ENCODE measurements at regions of chrX and their contacts with region 1.

Region 1: DNA sequence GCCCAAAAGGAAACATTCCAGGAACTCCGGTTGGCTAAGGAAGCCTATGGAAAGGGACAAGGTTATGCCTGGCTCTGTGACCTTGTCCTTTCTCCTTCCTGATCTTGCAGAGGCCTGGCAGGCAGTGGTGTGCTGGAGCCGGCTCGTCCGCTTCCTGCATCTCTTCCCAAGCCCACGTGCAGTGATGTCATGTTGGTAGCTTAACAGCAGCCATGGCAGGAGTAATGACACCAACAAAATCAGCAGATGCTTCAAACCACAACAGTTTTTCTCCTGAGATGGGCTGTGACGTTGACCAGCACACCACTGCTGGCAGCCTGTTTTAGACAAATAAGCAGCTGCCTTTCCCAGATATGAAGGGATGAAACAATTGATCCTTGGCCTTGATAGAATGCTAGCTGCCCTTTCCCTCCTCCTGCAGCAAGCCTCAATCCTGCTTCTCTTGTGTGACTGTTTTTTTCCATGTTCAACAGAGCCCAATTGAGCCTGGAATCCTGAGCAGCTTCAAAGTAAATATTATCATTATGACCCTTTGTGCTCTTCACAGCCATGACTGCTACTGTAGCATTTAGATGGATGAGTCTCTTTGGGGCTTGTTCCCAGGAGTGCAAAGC is 23.4 kb downstream of the SEPTIN6 start:
- DNase-seq: no peak
- H3K4me3 ChIP-seq: no peak overlapping the region
- H3K27ac ChIP-seq: no peak overlapping the region
- H3K4me1 ChIP-seq: no peaks in the 10 kb centered on the region
- H3K27me3 ChIP-seq: no peaks in the 10 kb centered on the region
- CTCF ChIP-seq: no peak

Region 2: GRCh38 chrX:119636419-119636818 is 33.1 kb before region 1 on chrX:
- CTCF ChIA-PET with region 1: no interaction called
- POLR2A ChIA-PET with region 1: no interaction called
- intact Hi-C with region 1: no loop called
- DNase-seq: no peak
- H3K4me3 ChIP-seq: no peak overlapping the region
- H3K27ac ChIP-seq: no peak overlapping the region
- H3K4me1 ChIP-seq: no peaks in the 10 kb centered on the region
- H3K27me3 ChIP-seq: no peaks in the 10 kb centered on the region
- CTCF ChIP-seq: no peak

Region 3: DNA sequence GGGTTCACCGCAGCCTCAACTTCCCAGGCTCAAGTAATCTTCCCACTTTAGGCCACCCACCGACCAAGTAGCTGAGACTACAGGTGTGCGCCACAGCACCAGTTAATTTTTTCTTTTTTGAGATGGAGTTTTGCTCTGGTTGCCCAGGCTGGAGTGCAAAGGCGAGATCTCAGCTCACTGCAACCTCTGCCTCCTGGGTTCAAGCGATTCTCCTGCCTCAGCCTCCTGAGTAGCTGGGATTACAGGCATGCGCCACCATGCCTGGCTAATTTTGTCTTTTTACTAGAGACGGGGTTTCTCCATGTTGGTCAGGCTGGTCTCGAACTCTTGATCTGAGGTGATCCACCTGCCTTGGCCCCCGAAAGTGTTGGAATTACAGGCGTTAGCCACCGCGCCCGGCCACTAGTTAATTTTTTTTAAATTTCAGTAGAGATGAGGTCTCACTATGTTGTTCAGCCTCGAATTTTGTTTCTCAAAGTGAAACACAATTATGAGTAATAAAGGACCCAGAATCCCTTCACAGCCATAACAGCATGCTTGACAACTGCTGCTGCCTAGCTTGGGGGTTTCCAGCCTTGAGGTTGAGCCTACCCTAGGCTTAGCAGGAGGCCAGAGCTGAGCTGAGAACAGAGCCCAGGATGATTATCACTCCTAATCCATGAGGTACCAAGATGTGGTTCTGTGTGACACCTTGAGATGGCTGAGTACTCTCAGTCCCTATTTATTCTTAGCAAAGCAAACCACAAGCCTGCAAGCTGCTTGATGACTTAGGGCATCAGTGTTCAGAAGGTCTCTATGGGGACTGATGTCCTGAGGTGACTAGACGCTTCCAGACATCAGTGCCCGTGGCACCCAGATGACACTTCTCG is 21.7 kb before region 1 on chrX:
- CTCF ChIA-PET with region 1: interaction called, 16 read pairs
- POLR2A ChIA-PET with region 1: no interaction called
- intact Hi-C with region 1: no loop called
- DNase-seq: no peak
- H3K4me3 ChIP-seq: no peak overlapping the region
- H3K27ac ChIP-seq: no peak overlapping the region
- H3K4me1 ChIP-seq: no peaks in the 10 kb centered on the region
- H3K27me3 ChIP-seq: no peaks in the 10 kb centered on the region
- CTCF ChIP-seq: no peak

Measured in PC-9 (cell line).